Activated CD4-positive, alpha-beta memory T cell treated with anti-CD3 and anti-CD28 coated beads for 36 hours (primary cell): ENCODE measurements at regions of chr1 and their contacts with region 1.

Region 1: DNA sequence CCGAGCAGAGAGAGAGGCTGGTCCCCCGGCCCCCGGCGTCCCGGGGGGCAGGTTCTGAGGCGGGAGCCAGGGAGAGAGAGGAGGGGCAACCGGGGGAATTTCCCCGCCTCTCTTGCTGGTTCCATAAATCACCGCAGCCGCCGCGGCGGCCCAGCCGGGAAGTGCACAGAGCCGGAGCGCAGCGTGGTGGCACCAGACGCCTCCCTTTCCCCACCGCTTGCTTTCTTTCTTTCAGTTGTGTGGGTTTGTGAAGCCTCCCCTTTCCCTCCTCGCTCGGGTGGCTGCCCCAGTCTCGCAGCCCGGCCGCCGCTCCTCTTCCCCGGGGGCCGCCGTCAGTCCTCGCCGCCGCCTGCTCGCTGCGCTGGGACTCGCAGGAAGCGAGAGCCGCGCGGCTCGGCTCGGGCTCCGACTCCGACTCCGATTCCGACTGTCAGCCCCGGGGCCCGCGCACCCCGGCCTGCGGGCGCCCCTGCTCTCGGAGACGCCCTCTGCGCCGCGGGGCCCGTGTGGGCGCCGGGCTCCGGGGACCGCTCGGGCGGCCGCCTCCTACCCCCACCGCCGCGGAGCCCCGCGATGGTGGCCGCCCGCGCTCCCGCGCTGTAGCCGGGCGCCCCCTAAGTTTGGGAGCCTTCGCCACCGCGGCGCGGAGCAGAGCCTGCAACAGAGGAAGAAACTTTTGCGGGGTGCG is at the start of gene CACHD1:
- DNase-seq: peak; percentile 77
- H3K4me3 Mint-ChIP-seq: peak within 1 kb of the TSS; percentile 68
- H3K27ac Mint-ChIP-seq: no peak within 1 kb of the TSS
- H3K4me1 Mint-ChIP-seq: peaks cover 12% of the 10 kb centered on the region
- H3K27me3 Mint-ChIP-seq: peaks cover 52% of the 10 kb centered on the region
- total RNA-seq, gene CACHD1: 0.27 to 0.33 TPM

Region 2: GRCh38 chr1:64348961-64349648 is 121.0 kb before region 1 on chr1:
- CTCF ChIA-PET with region 1: no interaction called
- POLR2A ChIA-PET with region 1: no interaction called
- intact Hi-C with region 1: no loop called
- DNase-seq: no peak
- H3K4me3 Mint-ChIP-seq: no peak overlapping the region
- H3K27ac Mint-ChIP-seq: no peak overlapping the region
- H3K4me1 Mint-ChIP-seq: no peaks in the 10 kb centered on the region
- H3K27me3 Mint-ChIP-seq: no peaks in the 10 kb centered on the region

Region 3: DNA sequence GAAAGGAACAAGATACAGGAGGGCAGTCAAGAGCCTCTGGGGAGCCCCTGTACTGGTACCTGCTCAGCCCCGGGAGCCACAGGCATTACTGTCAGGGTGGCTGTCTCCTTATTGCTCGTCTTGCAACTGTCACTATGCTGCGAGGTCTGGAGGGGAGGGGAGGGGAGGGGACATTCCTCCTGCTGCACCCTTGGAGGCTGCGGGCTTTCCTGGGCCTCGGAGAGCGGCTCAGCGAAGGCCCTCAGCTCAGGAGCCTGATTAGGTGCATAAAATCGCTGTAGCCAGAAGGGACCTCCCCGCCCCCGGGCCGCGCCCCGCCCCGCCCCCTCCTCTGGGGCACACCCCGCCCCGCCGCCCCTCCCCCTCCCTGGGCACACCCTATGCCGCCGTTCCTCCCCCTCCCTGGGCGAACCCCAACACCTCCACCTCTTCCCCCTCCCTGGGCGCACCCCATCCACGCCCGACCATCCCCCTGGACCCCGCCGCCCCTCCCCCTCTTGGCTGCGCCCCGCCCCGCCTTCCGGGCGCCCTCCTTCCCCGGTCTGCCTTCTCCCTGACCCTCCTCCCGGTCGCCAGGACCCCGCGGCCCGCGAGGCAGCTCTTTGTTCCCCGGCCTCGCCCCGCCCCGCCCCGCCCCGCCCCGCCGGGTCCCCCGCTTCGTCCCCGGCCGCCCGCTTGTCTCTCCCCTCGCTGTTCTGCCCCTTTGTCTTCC is 35.3 kb after region 1 on chr1:
- CTCF ChIA-PET with region 1: no interaction called
- POLR2A ChIA-PET with region 1: no interaction called
- intact Hi-C with region 1: loop called (anchors 5 kb)
- DNase-seq: peak; percentile 65
- H3K4me3 Mint-ChIP-seq: peak overlapping the region; percentile 76
- H3K27ac Mint-ChIP-seq: no peak overlapping the region
- H3K4me1 Mint-ChIP-seq: peaks cover 14% of the 10 kb centered on the region
- H3K27me3 Mint-ChIP-seq: peaks cover 8% of the 10 kb centered on the region

Region 4: GRCh38 chr1:64539781-64540218 is 69.7 kb after region 1 on chr1:
- CTCF ChIA-PET with region 1: no interaction called
- POLR2A ChIA-PET with region 1: no interaction called
- intact Hi-C with region 1: loop called (anchors 5 kb)
- DNase-seq: no peak
- H3K4me3 Mint-ChIP-seq: no peak overlapping the region
- H3K27ac Mint-ChIP-seq: no peak overlapping the region
- H3K4me1 Mint-ChIP-seq: peaks cover 19% of the 10 kb centered on the region
- H3K27me3 Mint-ChIP-seq: no peaks in the 10 kb centered on the region

Region 5: GRCh38 chr1:64553281-64553680 is 83.2 kb after region 1 on chr1:
- CTCF ChIA-PET with region 1: no interaction called
- POLR2A ChIA-PET with region 1: no interaction called
- intact Hi-C with region 1: loop called (anchors 5 kb)
- DNase-seq: no peak
- H3K4me3 Mint-ChIP-seq: no peak overlapping the region
- H3K27ac Mint-ChIP-seq: no peak overlapping the region
- H3K4me1 Mint-ChIP-seq: peaks cover 24% of the 10 kb centered on the region
- H3K27me3 Mint-ChIP-seq: peaks cover 12% of the 10 kb centered on the region

Region 6: GRCh38 chr1:64675718-64676345 is 205.7 kb after region 1 on chr1:
- CTCF ChIA-PET with region 1: no interaction called
- POLR2A ChIA-PET with region 1: no interaction called
- intact Hi-C with region 1: loop called (anchors 10 kb)
- DNase-seq: no peak
- H3K4me3 Mint-ChIP-seq: no peak overlapping the region
- H3K27ac Mint-ChIP-seq: no peak overlapping the region
- H3K4me1 Mint-ChIP-seq: no peaks in the 10 kb centered on the region
- H3K27me3 Mint-ChIP-seq: peaks cover 4% of the 10 kb centered on the region

Region 7: DNA sequence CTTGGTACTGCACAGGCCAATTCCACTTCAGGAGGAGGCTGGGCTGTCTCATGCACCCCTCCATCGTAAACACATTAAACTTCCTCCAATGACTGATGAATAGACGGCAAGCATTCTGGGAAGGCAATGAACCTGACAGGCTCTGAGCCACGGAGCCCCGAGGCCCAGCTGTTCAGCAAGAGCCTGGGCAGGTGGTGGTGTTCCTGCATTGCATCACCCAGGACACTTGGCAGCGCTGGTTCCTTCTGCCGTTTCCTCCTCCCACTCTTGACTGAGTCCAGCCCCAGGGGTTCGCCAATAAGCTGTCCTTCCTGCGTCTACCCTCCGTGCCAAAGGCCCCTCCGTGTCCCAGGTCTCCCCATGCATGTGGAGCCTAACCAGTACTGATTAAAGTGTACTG is 386.4 kb after region 1 on chr1:
- CTCF ChIA-PET with region 1: no interaction called
- POLR2A ChIA-PET with region 1: no interaction called
- intact Hi-C with region 1: no loop called
- DNase-seq: no peak
- H3K4me3 Mint-ChIP-seq: no peak overlapping the region
- H3K27ac Mint-ChIP-seq: no peak overlapping the region
- H3K4me1 Mint-ChIP-seq: peaks cover 8% of the 10 kb centered on the region
- H3K27me3 Mint-ChIP-seq: no peaks in the 10 kb centered on the region